Gastrocnemius medialis (tissue), 4 donors: ENCODE measurements at regions of chr22 and their contacts with region 1.

Region 1: GRCh38 chr22:17471886-17472535 is 91.3 kb upstream of the SLC25A18 start:
- DNase-seq: peak; percentile 24 to 65
- ATAC-seq: peak; percentile 43 to 63
- H3K4me3 ChIP-seq: no peak overlapping the region
- H3K27ac ChIP-seq: peak overlapping the region; percentile 88 to 90 (median 89)
- H3K4me1 ChIP-seq: peaks cover 75 to 86% of the 10 kb centered on the region in 2 donors
- H3K27me3 ChIP-seq: no peaks in the 10 kb centered on the region
- CTCF ChIP-seq: no peak
- POLR2A ChIP-seq: no peak

Region 2: DNA sequence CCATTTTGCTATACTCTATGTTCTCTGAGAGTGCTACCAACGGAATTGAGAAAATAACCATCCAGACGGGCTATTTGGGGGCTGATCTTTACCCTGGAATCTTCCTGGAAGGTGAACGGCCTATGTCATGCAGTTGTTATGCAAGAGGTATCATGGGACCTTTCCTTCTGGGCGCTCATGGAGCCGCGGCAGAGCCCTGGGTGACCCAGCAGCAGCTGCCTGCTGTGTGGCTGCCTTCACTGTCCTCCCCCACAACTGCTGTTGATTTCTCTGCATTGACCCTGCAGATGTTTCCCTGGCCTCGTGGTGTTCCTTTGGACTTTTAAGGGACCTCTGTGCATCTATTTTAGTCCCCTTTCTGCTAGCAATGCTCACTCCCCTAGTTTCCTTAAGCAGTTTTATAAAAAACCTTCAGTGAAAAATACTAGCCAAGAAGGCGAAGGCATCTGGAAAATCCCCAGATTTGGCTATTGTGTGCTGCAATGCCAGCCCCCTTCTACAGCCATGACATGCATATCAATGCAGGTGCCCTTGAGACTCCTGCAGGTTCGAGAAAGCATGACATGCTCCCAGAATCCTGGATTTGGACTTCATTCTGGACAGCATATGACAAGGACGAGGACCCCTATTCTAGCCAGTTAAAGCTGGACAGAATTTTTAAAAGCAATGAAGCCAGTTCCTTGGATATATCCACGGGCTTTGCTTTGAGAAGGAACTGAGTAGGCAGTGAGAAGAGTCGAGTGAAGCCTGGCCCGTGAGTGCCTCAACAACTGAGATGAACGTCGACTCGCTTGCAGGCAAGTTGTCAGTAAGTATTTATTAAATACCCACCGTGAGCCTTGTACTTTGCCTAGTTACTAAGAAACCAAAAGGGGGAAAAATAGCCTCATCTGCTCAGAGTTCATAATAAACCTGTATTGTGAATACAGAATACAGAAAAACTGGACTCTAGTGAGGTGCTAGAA is 91.2 kb after region 1 on chr22 and contains the start of gene SLC25A18:
- in situ Hi-C with region 1: no loop called
- intact Hi-C with region 1: loop called (anchors 2 kb)
- DNase-seq: peak; percentile 88 to 91
- ATAC-seq: peak; percentile 82 to 89
- H3K4me3 ChIP-seq: peak within 1 kb of the TSS; percentile 43 to 55 (median 52)
- H3K27ac ChIP-seq: peak within 1 kb of the TSS; percentile 87 to 98 (median 96)
- H3K4me1 ChIP-seq: peaks cover 30 to 47% of the 10 kb centered on the region in 2 donors
- H3K27me3 ChIP-seq: no peaks in the 10 kb centered on the region
- CTCF ChIP-seq: peak in 3 of 5 experiments; percentile 12 to 40 (median 26)
- POLR2A ChIP-seq: peak; percentile 62 to 65
- total RNA-seq, gene SLC25A18: 9.3 to 22.2 (median 13.3) TPM